ENCODE measurements at regions of chr4 and their contacts with region 1.

Region 1: GRCh38 chr4:40316782-40317635 is 18.1 kb upstream of the CHRNA9 start:
- DNase-seq: peak; percentile 69
- H3K4me3 ChIP-seq: peak overlapping the region; percentile 58
- H3K27ac ChIP-seq: peak overlapping the region; percentile 98
- H3K27me3 ChIP-seq: no peaks in the 10 kb centered on the region
- CTCF ChIP-seq: peak; percentile 82

Region 2: GRCh38 chr4:40056716-40057585 is 260.1 kb before region 1 on chr4 and contains the start of gene N4BP2:
- CTCF ChIA-PET with region 1: interaction called, 13 read pairs
- POLR2A ChIA-PET with region 1: interaction called, 18 read pairs
- DNase-seq: peak; percentile 38
- H3K4me3 ChIP-seq: peak within 1 kb of the TSS; percentile 79
- H3K27ac ChIP-seq: peak within 1 kb of the TSS; percentile 92
- H3K27me3 ChIP-seq: no peaks in the 10 kb centered on the region
- CTCF ChIP-seq: peak; percentile 62
- polyA plus RNA-seq, gene N4BP2: 3.2 and 5.7 TPM in 2 replicates

Region 3: DNA sequence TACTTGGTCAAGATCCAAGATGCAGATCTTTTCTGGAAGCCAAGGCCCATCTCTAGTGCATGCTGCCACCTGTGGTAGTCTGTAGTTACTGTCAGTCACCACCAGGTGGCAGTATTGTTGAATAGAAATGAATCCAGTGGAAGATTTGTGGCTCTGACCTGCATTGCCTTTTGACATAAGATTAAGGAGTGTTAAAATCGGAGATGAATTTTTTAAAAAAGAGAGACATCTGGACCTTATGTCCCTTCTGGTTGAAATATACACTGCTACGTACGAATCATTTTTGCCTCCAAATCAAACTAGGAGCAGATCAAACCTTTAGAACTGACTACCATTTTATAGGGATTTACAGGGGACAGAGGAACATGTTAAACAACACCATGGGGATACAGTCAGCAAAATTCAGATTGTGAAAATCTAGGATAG is 167.0 kb before region 1 on chr4:
- CTCF ChIA-PET with region 1: interaction called, 31 read pairs
- POLR2A ChIA-PET with region 1: no interaction called
- DNase-seq: peak; percentile 30
- H3K4me3 ChIP-seq: no peak overlapping the region
- H3K27ac ChIP-seq: no peak overlapping the region
- H3K27me3 ChIP-seq: no peaks in the 10 kb centered on the region
- CTCF ChIP-seq: peak; percentile 71

Region 4: GRCh38 chr4:40333921-40334352 is 16.9 kb after region 1 on chr4:
- CTCF ChIA-PET with region 1: interaction called, 24 read pairs
- POLR2A ChIA-PET with region 1: interaction called, 5 read pairs
- DNase-seq: peak; percentile 32
- H3K4me3 ChIP-seq: no peak overlapping the region
- H3K27ac ChIP-seq: peak overlapping the region; percentile 52
- H3K27me3 ChIP-seq: no peaks in the 10 kb centered on the region
- CTCF ChIP-seq: no peak

Region 5: GRCh38 chr4:40719008-40719623 is 402.1 kb after region 1 on chr4:
- CTCF ChIA-PET with region 1: interaction called, 13 read pairs
- POLR2A ChIA-PET with region 1: no interaction called
- DNase-seq: no peak
- H3K4me3 ChIP-seq: no peak overlapping the region
- H3K27ac ChIP-seq: no peak overlapping the region
- H3K27me3 ChIP-seq: no peaks in the 10 kb centered on the region
- CTCF ChIP-seq: peak; percentile 70